ENCODE measurements at regions of chr3 and their contacts with region 1.

Region 1: GRCh38 chr3:50350527-50351322 is at the starts of genes CYB561D2 and NPRL2:
- DNase-seq: peak; percentile 93 to 97 (median 96)
- H3K4me3 ChIP-seq: peak within 1 kb of the TSS; percentile 62 to 87 (median 83)
- H3K27ac ChIP-seq: peak within 1 kb of the TSS; percentile 29 to 79
- H3K4me1 ChIP-seq: peaks cover 2 to 49% (median 36%) of the 10 kb centered on the region in 4 experiments
- H3K27me3 ChIP-seq: no peaks in the 10 kb centered on the region

Region 2: GRCh38 chr3:50088725-50089608 is 261.8 kb before region 1 on chr3 and contains the start of gene RBM5:
- CTCF ChIA-PET with region 1: no interaction called
- POLR2A ChIA-PET with region 1: no interaction called
- DNase-seq: peak; percentile 94 to 97 (median 96)
- H3K4me3 ChIP-seq: peak within 1 kb of the TSS; percentile 78 to 100 (median 97)
- H3K27ac ChIP-seq: peak within 1 kb of the TSS; percentile 99
- H3K4me1 ChIP-seq: peaks cover 14 to 22% (median 18%) of the 10 kb centered on the region in 4 experiments
- H3K27me3 ChIP-seq: no peaks in the 10 kb centered on the region

Region 3: DNA sequence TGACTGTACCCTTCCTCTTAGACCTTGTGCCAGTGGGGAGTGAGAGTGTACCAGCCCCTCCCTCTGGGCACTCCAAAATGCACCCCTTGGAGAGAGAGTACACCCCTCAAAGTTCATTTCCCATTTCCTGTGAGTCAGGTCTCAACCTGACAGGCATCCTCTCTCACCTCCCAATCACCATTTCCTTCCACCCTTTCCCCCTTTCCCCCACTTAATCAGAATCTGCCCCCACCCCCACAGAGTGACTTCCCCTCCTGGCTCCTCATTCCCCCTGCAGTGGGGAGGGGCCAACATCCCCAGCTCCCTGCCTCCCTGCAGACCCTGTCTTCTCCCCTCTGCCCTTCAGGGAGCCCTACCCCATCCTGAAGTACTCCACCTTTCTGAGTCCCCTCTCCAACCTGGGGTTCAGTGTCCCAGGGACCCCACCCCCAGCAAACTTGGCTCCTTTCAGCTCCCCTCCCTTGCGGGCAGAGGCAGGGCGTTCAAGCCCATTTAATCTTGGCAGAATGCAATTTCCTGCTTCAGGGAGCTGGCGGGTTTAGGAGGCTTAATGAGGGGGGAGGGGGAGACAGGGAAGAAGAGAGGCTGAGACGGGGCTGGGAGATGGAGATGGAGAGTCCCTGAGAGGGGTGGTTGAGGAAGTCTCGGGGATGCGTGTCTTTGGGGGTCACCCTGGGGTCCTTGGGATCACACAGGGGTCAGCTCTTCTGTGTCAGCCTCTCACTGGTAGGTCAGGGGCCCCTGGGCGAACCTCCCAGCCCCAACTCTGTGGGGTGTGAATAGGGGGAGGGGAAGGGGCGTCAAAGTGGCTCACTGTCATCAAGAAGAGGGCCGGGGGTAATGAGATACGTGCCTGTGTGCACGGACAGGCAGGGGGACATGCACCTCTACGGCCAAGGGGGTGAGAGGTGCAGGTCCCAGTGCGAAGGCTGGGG is 212.2 kb before region 1 on chr3:
- CTCF ChIA-PET with region 1: no interaction called
- POLR2A ChIA-PET with region 1: no interaction called
- DNase-seq: peak in 2 of 3 donors; percentile 31 to 35
- H3K4me3 ChIP-seq: peak overlapping the region in 1 of 7 experiments; percentile 34
- H3K27ac ChIP-seq: no peak overlapping the region
- H3K4me1 ChIP-seq: peaks cover 0 to 29% (median 20%) of the 10 kb centered on the region in 4 experiments
- H3K27me3 ChIP-seq: peaks cover 0 to 2% (median 0%) of the 10 kb centered on the region in 5 experiments

Region 4: DNA sequence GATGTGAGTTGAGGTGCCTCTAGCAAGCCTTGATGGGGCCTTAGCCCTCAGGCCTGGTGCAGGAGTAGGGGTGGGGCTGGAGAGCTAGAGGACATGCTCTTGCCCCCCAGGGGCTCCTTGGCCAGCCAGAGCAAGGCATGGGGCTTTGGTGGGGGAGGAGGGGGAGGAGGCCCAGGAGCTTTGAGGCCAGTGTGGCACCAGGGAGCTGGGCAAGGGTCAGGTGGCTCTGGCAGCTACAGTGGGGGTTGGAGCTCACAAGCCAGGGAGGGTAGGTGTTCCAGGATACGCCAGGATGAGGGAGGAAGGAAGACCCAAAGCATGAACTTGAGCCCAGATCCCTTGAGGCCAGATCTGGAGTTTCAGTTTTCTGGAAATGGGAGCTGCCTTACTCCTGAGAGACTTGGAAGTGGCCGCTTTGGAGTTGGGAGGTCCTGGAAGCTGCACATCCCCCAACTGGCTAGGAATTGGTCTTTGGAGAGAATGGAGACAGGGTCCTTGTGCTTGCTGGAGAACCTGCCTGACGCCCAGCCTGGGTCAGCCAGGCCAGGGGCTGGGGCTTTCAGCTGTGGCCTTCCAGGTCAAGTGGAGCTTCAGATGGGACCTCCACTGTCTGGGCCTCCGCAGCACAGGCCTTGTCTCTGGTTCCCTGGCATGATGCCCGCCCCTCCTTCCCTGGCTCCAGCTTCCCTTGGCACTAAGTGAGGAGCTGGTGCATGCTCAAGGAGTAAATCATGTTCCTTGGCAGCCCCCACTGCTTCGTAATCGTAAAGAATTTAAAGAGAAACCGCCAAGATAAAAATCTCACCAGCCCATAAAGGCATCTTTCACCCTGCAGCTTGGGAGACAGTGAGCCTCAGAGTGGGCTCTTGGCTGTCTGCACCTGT is 186.9 kb before region 1 on chr3:
- CTCF ChIA-PET with region 1: no interaction called
- POLR2A ChIA-PET with region 1: no interaction called
- DNase-seq: no peak
- H3K4me3 ChIP-seq: no peak overlapping the region
- H3K27ac ChIP-seq: no peak overlapping the region
- H3K4me1 ChIP-seq: peaks cover 0 to 9% (median 3%) of the 10 kb centered on the region in 4 experiments
- H3K27me3 ChIP-seq: no peaks in the 10 kb centered on the region

Region 5: GRCh38 chr3:50337191-50337841 is 13.4 kb before region 1 on chr3:
- CTCF ChIA-PET with region 1: interaction called, 51 read pairs
- POLR2A ChIA-PET with region 1: interaction called, 5 read pairs
- DNase-seq: peak; percentile 97 to 99 (median 98)
- H3K4me3 ChIP-seq: peak overlapping the region; percentile 64 to 91 (median 79)
- H3K27ac ChIP-seq: peak overlapping the region; percentile 93 to 97
- H3K4me1 ChIP-seq: peaks cover 15 to 78% (median 71%) of the 10 kb centered on the region in 4 experiments
- H3K27me3 ChIP-seq: no peaks in the 10 kb centered on the region

Region 6: DNA sequence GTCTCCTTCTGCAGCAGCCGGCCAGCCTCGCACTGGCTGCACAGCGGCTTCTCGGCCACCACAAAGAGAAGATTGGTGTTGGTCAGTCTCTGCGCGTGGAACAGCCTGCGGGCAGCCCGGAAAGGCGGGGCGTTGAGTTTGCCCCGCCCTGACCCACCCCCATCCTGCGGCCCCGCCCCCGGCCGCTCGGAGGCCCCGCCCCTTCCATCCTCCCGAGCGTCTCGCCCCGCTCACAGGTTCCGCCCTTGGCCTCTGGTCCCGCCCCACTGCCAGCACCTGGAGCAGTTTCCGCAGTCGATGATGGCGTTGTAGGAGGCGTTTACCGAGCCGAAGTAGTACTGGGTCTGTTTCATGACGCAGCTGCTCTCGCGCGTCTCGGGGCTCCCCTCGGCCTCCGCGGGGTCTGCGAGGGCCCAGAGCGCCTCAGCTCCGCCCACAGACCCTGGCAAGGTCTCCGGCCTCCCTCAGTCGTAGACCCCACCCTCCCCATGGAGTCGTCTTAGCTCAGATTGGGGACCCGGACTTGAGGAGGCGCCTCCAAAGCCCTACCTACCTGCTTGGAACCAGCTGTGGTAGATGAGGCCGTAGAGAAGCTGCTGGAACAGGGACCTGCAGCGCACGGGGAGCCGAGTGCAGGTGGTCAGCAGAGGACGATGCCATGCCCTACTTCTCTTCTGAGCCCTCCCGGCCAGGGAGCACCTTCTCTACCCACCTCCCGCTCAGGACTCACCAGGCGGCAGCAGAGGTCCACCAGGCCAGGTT is 14.5 kb after region 1 on chr3:
- CTCF ChIA-PET with region 1: interaction called, 28 read pairs
- POLR2A ChIA-PET with region 1: interaction called, 8 read pairs
- DNase-seq: peak; percentile 91 to 96 (median 96)
- H3K4me3 ChIP-seq: peak overlapping the region; percentile 18 to 84 (median 61)
- H3K27ac ChIP-seq: peak overlapping the region in 1 of 2 experiments; percentile 45
- H3K4me1 ChIP-seq: peaks cover 0 to 18% (median 14%) of the 10 kb centered on the region in 4 experiments
- H3K27me3 ChIP-seq: peaks cover 0 to 8% (median 0%) of the 10 kb centered on the region in 5 experiments

Region 7: DNA sequence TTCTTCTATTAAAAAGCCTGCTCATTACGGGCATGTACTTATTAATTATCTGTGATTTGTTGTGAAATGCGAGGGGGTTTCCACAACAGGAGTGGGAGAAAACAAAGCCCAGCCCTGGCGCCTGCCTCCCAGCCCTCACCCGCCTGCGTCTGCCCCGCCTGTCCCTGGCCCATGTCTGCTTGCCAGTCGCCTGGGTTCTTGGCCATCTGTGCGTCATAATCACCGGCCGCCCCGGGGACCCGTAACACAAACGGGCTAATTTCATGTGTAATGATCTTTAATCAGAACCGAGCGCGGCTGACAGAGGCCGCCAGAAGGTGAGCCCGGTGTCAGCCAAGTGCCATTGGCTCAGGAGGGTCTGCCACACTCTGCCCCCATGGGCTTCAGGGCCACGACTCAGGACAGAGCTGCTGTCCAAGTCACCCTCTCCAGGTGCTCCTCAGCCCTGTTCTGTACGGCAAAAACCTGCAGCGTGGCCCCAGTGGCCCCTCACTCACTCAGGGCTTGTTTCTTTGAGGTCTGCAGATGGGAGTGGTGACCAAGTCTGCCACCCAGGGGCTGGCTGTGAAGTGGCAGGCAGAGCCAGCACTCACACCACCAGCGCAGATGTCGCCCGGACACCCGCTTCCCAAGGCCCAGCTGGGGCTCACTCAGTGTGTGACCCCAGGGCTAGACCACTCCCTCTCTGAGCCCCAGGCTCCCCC is 37.4 kb after region 1 on chr3:
- CTCF ChIA-PET with region 1: interaction called, 28 read pairs
- POLR2A ChIA-PET with region 1: no interaction called
- DNase-seq: peak in 2 of 3 donors; percentile 40 to 42
- H3K4me3 ChIP-seq: no peak overlapping the region
- H3K27ac ChIP-seq: no peak overlapping the region
- H3K4me1 ChIP-seq: peaks cover 0 to 12% (median 9%) of the 10 kb centered on the region in 4 experiments
- H3K27me3 ChIP-seq: peaks cover 0 to 2% (median 0%) of the 10 kb centered on the region in 5 experiments

Region 8: DNA sequence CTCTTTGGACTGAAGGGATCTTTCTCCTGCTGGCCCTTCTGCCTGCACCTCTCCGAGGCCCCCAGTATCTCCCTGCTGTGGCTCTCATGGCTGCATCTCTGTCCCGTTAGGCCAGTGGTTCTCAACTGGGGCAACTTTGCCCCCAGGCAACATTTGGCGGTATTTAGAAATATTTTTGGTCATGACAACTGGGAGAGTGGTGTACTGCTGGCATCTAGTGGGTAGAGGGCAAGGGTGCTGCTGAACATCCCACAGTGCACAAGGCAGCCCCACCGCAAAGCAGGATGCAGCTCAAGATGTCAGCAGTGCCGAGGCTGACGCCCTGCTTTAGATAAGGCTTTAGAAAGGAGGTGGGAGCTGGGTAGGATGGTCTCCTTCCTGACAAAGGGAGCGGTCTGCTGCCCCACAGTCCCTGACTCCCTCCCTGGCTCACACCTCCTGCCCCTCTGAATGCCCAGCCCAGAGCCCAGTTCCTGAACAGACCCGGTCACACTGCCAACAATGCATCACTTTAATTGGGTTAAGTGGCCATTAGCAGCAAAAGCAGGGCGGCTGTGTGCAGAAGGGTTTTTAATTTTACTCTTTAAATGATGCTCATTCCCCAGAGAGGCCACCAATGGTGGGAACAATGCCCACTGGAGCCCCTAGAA is 77.4 kb after region 1 on chr3:
- CTCF ChIA-PET with region 1: interaction called, 14 read pairs
- POLR2A ChIA-PET with region 1: no interaction called
- DNase-seq: peak; percentile 34 to 75 (median 69)
- H3K4me3 ChIP-seq: no peak overlapping the region
- H3K27ac ChIP-seq: no peak overlapping the region
- H3K4me1 ChIP-seq: peaks cover 0 to 7% (median 1%) of the 10 kb centered on the region in 4 experiments
- H3K27me3 ChIP-seq: no peaks in the 10 kb centered on the region

Region 9: DNA sequence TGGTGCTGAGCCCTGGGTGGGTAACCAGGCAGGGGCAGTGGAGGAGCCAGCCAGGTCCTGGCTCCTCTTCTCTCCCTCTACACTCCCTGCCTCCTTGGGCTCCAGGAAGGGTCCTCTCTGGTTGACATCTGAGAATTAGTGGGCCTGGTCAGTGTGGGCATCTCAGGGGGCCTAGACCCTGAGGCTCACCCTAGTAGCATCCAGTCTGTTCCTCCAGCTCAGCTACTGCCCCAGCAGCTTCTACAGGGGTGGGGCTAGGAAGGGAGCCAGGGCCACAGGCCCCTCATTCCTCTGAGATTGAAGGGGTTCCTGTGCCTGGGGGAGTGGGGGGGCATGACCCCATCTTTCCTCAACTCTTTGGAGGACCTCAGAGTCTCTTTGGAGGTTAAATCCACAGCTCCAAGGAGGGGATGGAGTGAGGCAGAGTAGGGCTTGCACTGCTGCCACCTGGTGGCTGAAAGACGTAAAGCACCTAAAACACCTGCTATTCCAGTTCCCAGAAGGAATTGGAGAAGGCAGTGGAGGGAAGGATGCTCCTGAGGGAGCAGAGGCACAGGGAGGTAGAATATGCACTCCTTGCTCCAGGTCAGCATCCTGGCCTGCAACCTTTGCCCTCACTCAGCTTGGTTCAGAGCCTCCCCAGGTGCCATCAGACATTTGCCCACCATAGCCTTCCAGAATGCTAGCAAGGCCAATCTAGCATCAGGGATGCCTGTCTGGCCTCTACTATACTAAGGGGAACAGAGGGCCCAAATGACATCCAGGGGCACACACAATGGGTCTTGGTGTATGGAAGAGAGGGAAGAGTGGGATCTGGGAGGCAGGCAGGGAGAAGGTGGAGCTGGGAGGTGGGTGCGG is 191.7 kb after region 1 on chr3:
- CTCF ChIA-PET with region 1: interaction called, 24 read pairs
- POLR2A ChIA-PET with region 1: no interaction called
- DNase-seq: peak; percentile 28 to 66 (median 50)
- H3K4me3 ChIP-seq: no peak overlapping the region
- H3K27ac ChIP-seq: no peak overlapping the region
- H3K4me1 ChIP-seq: peaks cover 0 to 2% (median 0%) of the 10 kb centered on the region in 4 experiments
- H3K27me3 ChIP-seq: peaks cover 0 to 14% (median 2%) of the 10 kb centered on the region in 5 experiments

Measured in common myeloid progenitor, CD34-positive (primary cell).